ENCODE measurements at regions of chr3 and their contacts with region 1.

Region 1: DNA sequence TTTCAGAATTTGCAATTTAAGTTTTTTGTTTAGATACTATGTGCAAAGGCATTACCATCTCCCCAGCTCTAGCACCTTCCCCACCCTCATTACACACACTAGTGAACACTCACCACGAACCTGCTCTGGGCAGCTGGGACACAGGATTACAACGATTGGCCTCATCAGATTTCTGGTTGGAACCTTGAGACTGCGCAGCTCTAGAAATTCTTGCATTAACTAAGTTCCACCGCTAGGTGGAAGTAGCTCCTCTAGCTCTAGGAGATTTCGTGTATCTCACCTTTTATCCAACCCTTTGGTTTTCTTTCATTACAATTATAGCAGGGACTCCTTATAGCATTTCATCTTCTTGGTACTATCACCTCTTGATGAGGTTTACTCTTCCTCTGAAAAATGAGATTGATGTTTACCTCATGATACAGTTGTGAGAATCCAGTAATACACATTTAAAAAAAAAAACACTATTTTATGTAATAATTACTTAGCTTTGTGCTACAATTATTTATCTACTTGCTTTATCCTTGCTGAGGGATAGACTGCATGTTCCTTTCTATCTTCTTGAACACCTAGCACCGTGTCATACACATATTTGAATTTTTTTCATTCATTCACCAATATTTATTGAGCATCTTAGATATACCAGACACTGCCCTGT is 28.7 kb upstream of the PLOD2 start:
- DNase-seq: peak; percentile 73
- H3K4me3 Mint-ChIP-seq: no peak overlapping the region
- H3K27ac Mint-ChIP-seq: no peak overlapping the region
- H3K4me1 Mint-ChIP-seq: no peaks in the 10 kb centered on the region
- H3K27me3 Mint-ChIP-seq: peaks cover 8% of the 10 kb centered on the region

Region 2: DNA sequence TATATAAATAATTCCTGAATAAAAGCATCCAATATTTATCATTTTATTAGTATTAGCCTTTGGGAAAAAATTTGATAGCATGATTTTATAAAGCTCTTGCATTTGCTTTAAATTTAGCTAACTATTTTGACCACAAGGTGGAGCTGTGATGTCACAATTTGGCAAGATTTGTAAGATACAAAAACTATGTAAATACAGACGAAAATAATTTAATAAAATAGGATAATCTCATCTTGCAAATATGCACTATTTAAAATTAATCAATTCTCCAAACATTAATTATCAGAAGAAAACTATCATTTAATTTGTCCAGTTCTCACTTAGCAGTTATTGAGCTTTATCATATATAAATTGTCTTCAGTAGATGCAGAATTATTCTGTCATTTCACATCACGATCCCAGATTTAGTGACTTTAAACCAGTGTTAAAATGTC is 124.1 kb before region 1 on chr3:
- intact Hi-C with region 1: loop called (anchors 5 kb)
- DNase-seq: peak; percentile 58
- H3K4me3 Mint-ChIP-seq: no peak overlapping the region
- H3K27ac Mint-ChIP-seq: no peak overlapping the region
- H3K4me1 Mint-ChIP-seq: no peaks in the 10 kb centered on the region
- H3K27me3 Mint-ChIP-seq: no peaks in the 10 kb centered on the region